GM10248 (cell line): ENCODE measurements at regions of chr5 and their contacts with region 1.

Region 1: GRCh38 chr5:139968547-139969261 is 74.4 kb downstream of the NRG2 start:
- DNase-seq: peak; percentile 90
- CTCF ChIP-seq: peak; percentile 100

Region 2: GRCh38 chr5:139439013-139439903 is 529.4 kb before region 1 on chr5 and contains the start of gene DNAJC18:
- CTCF ChIA-PET with region 1: no interaction called
- POLR2A ChIA-PET with region 1: no interaction called
- DNase-seq: peak; percentile 94
- CTCF ChIP-seq: no peak

Region 3: GRCh38 chr5:139765409-139766217 is 203.1 kb before region 1 on chr5:
- CTCF ChIA-PET with region 1: interaction called, 16 read pairs
- POLR2A ChIA-PET with region 1: no interaction called
- DNase-seq: peak; percentile 87
- CTCF ChIP-seq: peak; percentile 95

Region 4: GRCh38 chr5:139806726-139807646 is 161.7 kb before region 1 on chr5:
- CTCF ChIA-PET with region 1: interaction called, 18 read pairs
- POLR2A ChIA-PET with region 1: no interaction called
- DNase-seq: no peak
- CTCF ChIP-seq: no peak

Region 5: GRCh38 chr5:139856714-139857113 is 112.0 kb before region 1 on chr5:
- CTCF ChIA-PET with region 1: interaction called, 38 read pairs
- POLR2A ChIA-PET with region 1: no interaction called
- DNase-seq: no peak
- CTCF ChIP-seq: no peak

Region 6: GRCh38 chr5:139893873-139894272 is 74.8 kb before region 1 on chr5:
- CTCF ChIA-PET with region 1: interaction called, 51 read pairs
- POLR2A ChIA-PET with region 1: no interaction called
- DNase-seq: no peak
- CTCF ChIP-seq: no peak

Region 7: DNA sequence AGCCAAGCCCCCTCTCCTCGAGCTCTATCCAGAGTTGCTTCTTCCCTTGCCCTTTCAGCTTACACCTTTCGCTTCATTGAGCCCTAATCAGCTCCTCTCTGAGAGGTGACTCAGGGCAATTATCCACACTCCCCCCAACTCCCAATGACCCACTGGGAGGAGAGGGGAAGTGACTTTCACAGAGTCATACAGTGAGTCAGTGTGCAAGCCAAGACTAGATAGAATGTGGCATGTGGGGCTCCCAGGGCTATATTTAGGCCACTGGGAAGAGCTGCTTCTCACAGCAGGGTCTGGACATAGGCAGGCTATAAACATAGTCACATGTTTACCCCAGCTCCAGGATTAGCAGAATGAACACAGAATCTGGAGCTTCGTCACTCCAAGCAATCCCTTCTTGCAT is 17.0 kb after region 1 on chr5:
- CTCF ChIA-PET with region 1: interaction called, 403 read pairs
- POLR2A ChIA-PET with region 1: no interaction called
- DNase-seq: no peak
- CTCF ChIP-seq: no peak

Region 8: DNA sequence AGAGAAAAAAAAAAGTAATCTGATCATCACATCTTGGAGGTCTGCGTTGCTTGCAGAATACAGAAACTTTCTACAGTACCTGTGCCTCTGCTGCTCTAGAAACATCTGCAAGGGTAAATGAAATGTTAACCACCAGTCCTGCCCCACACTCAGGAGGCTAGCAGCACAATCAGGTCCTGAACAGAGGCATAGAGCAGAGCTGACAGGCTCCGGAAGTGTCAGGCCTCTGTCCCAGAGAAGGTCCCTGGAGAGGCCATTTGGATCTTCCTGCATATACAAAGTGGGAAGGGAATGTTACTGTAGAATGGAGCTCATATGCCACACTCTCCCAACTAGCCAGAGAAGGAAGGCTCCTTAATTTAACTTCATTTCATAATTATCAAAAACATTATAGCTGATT is 67.2 kb after region 1 on chr5:
- CTCF ChIA-PET with region 1: interaction called, 24 read pairs
- POLR2A ChIA-PET with region 1: no interaction called
- DNase-seq: no peak
- CTCF ChIP-seq: no peak

Region 9: DNA sequence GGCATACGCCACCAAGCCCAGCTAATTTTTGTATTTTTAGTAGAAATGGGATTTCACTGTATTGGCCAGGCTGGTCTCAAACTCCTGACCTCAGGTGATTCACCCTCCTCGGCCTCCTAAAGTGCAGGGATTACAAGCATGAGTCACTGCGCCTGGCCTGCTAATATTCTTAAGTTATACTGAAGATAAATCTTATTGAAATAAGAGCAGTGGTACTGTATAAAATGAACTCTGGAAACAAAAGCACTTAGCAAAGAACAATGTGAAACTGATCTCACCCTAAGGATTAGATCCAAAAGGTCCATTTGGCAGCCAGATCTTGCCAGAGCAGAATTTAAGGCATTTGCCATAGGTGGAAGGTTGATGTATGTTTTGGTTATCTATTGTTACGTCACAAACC is 233.4 kb after region 1 on chr5:
- CTCF ChIA-PET with region 1: no interaction called
- POLR2A ChIA-PET with region 1: no interaction called
- DNase-seq: no peak
- CTCF ChIP-seq: no peak